BJ (cell line): ENCODE measurements at regions of chr1 and their contacts with region 1.

Region 1: GRCh38 chr1:174262349-174263241 is 103.3 kb downstream of the RABGAP1L start:
- DNase-seq: peak; percentile 11
- H3K4me3 ChIP-seq: no peak overlapping the region
- H3K27me3 ChIP-seq: no peaks in the 10 kb centered on the region
- CTCF ChIP-seq: peak; percentile 74

Region 2: GRCh38 chr1:174276087-174276486 is 13.5 kb after region 1 on chr1:
- CTCF ChIA-PET with region 1: interaction called, 23 read pairs
- POLR2A ChIA-PET with region 1: no interaction called
- DNase-seq: no peak
- H3K4me3 ChIP-seq: no peak overlapping the region
- H3K27me3 ChIP-seq: no peaks in the 10 kb centered on the region
- CTCF ChIP-seq: no peak

Region 3: DNA sequence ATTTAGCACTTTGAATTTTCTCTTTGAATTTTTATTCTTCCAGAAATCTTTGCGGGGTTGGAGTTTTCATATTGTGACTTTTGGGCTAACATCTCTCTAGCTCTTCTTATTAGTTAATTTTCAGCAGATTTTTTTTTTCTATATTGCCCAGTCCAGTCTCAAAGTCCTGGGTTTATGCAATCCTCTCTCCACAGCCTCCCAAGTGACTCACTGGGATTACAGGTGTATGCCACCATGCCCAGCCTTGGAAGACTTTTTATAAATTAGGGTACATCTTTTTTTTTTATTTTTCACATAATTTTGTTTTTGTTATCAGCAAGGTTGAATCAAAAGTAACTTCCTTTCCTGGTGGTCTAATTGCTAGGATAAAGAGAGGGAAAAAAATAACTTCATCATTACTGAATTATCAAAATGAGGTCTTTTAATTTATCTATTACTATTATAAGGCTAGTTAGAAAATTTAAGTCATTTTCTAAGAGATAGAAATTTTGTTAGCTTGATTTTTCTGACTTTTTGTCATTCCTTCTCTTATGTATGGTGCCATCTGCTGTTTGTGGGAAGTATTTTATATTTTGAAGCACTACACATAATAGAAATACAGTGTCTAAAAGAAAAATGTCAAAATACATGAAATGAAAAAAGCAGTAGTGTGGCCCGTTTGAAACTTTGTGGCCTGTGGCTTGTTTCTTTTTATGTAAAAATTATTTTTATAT is 463.7 kb after region 1 on chr1:
- CTCF ChIA-PET with region 1: interaction called, 54 read pairs
- POLR2A ChIA-PET with region 1: no interaction called
- DNase-seq: no peak
- H3K4me3 ChIP-seq: no peak overlapping the region
- H3K27me3 ChIP-seq: no peaks in the 10 kb centered on the region
- CTCF ChIP-seq: peak; percentile 52

Region 4: DNA sequence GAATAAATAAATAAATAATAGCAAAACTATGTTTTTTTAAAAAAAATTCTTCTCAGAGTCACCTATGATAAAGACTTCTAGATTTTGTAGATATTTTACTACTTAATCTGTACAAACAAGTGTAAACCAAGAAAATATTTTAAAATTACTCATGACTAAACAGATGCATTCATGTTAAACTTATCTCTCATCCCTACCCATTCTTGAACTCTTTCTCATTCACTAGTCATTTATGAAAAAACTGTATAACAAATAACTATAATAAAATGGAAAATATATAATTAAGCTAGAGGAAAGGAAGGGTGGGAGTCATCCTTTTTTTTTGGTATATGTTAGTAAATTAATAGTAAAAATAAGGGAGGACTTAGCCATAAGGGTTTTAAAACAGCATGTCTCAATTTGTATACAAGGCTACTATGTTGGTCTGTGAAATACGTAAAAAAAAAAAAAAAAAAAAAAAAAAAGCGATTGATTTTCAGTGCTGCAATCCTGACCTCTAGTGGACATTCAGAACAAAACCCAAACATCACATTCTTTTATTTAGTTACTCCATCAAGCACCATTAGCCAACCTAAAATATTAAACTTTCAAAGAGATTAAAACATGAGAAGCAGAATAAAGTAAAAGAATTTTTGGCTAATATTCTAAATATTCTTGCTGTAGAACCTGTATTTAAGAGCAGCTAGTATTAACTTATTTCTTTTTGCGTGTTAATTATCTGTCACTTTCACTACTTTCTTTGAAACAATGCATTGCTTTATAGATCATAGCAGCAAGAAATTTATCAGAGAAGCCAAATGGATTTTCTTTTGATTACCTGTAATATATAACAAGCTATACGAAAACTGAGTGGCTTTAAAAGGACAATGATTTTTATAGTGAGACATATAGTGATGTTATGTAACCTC is 481.3 kb after region 1 on chr1:
- CTCF ChIA-PET with region 1: interaction called, 84 read pairs
- POLR2A ChIA-PET with region 1: no interaction called
- DNase-seq: no peak
- H3K4me3 ChIP-seq: no peak overlapping the region
- H3K27me3 ChIP-seq: no peaks in the 10 kb centered on the region
- CTCF ChIP-seq: peak; percentile 62